CD4-positive, alpha-beta T cell (primary cell): ENCODE measurements at regions of chr1 and their contacts with region 1.

Region 1: GRCh38 chr1:157090196-157090647 is 9.4 kb downstream of the ETV3L start:
- DNase-seq: peak; percentile 78 to 92 (median 86)
- ATAC-seq: peak; percentile 83
- H3K4me3 ChIP-seq: no peak overlapping the region
- H3K4me3 Mint-ChIP-seq: no peak overlapping the region
- H3K27ac ChIP-seq: no peak overlapping the region
- H3K27ac Mint-ChIP-seq: no peak overlapping the region
- H3K4me1 ChIP-seq: peaks cover 7% of the 10 kb centered on the region
- H3K4me1 Mint-ChIP-seq: peaks cover 5% of the 10 kb centered on the region
- H3K27me3 ChIP-seq: peaks cover 0 to 2% of the 10 kb centered on the region in 2 experiments
- H3K27me3 Mint-ChIP-seq: peaks cover 6% of the 10 kb centered on the region
- CTCF ChIP-seq: peak; percentile 95

Region 2: DNA sequence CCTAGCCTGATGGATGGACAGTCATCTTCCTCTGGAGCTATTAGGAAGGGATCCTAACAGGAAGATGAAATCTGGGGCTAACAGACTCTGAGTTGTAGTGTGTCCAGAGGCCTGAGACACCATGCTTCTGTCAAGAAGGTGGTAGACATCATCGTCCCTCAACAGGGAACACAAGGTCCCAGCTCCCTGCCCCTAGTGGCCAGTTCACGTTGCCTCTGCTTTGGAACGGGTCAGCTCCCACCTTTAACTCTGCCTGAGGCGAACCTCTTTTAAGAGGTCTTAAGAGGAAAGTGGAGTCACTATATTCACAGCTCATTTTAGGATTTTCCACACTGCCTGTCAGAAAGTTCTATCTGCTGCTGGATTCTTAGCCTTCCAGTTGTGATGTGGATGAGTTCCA is 141.5 kb before region 1 on chr1:
- CTCF ChIA-PET with region 1: no interaction called
- POLR2A ChIA-PET with region 1: no interaction called
- intact Hi-C with region 1: no loop called
- DNase-seq: no peak
- ATAC-seq: no peak
- H3K4me3 ChIP-seq: no peak overlapping the region
- H3K4me3 Mint-ChIP-seq: no peak overlapping the region
- H3K27ac ChIP-seq: no peak overlapping the region
- H3K27ac Mint-ChIP-seq: no peak overlapping the region
- H3K4me1 ChIP-seq: no peaks in the 10 kb centered on the region
- H3K4me1 Mint-ChIP-seq: no peaks in the 10 kb centered on the region
- H3K27me3 ChIP-seq: no peaks in the 10 kb centered on the region
- H3K27me3 Mint-ChIP-seq: no peaks in the 10 kb centered on the region
- CTCF ChIP-seq: no peak

Region 3: DNA sequence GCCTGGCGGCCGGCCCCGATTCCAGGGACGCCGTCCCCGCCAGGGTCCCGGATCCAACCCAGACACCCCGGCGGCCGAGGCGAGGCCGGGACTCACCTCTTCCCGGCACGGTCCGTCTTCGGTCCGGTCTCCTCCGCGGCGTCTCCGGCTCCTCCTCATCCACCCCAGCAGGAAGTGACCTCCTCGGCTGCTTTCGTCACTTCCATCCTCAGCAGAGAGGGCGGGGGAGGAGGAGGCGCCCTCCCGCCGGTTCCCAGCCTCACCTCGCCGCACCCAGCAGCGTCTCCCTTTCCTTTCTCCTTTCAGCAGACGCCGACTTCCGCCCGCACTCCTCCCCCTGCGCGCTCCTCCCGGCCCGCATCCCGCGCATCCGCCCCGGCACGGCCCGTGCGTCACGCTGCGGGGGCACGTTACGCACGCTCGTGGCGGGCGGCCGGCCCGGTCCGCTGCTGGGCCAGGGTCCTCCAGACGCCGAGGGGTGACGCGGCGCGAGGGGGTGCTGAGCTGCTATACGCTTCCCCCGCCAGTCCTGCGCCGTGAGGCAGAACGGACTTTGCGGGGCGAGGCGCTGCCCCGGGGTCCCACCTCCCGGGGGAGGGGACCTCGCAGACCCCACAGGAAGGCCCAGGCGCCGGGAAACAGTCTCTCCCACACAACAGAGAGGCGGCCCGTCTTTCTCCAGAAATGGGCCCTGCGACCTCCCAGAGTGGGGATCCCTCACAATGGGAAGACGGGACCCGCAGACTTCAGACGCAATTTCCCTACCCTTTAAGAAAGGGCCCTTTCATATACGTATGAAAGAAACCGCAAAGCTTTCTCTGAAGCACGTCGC is 48.2 kb after region 1 on chr1 and contains the start of gene ETV3:
- CTCF ChIA-PET with region 1: interaction called, 27 read pairs
- POLR2A ChIA-PET with region 1: interaction called, 3 read pairs
- intact Hi-C with region 1: loop called in 1 of 2 experiments (anchors 5 kb)
- DNase-seq: peak; percentile 70 to 96 (median 81)
- ATAC-seq: peak; percentile 81
- H3K4me3 ChIP-seq: peak within 1 kb of the TSS; percentile 84
- H3K4me3 Mint-ChIP-seq: peak within 1 kb of the TSS; percentile 94
- H3K27ac ChIP-seq: peak within 1 kb of the TSS; percentile 90 to 98
- H3K27ac Mint-ChIP-seq: peak within 1 kb of the TSS; percentile 90
- H3K4me1 ChIP-seq: peaks cover 48% of the 10 kb centered on the region
- H3K4me1 Mint-ChIP-seq: peaks cover 60% of the 10 kb centered on the region
- H3K27me3 ChIP-seq: no peaks in the 10 kb centered on the region
- H3K27me3 Mint-ChIP-seq: no peaks in the 10 kb centered on the region
- CTCF ChIP-seq: no peak
- total RNA-seq, gene ETV3: 115 to 117 TPM

Region 4: DNA sequence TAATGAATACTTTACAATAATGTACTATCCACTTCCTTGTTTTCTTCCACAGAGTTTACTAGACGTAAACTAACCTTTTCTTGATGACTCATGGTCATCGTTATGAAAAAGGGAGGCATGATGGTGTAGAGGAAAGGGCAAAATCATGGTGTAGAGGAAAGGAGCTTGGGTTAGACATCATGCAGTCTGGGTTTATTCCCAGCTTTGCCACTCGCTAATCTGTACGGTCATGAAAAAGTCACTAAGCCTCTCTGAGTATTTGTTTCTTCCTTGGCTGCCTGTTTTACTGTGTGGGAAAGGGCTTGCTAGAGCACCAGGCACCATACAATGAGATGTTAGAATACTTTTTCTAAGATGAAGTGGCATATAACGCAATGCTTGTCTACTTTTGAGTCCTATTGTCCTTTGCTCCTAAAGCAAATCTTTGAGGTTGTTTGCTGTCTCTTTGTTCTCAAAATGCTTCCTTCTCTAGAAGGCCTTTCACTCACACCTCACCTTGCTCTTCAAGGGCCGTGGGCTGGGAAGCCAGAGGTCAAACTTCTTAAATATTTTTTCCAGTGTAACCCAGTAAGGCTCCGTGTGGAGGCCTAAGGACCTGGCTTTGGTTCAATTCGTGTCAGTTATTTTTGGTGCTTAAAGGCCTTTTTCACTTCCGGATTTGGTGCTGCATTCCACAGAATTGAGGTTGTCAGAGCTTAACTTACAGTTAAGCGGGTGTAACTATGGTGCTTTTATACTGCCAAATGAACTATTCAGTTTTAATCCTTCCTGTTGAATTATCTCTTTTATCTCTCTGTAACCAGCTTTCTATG is 57.9 kb after region 1 on chr1:
- CTCF ChIA-PET with region 1: interaction called, 241 read pairs
- POLR2A ChIA-PET with region 1: no interaction called
- intact Hi-C with region 1: no loop called
- DNase-seq: peak in 1 of 14 experiments; percentile 39
- ATAC-seq: no peak
- H3K4me3 ChIP-seq: no peak overlapping the region
- H3K4me3 Mint-ChIP-seq: no peak overlapping the region
- H3K27ac ChIP-seq: no peak overlapping the region
- H3K27ac Mint-ChIP-seq: no peak overlapping the region
- H3K4me1 ChIP-seq: peaks cover 5% of the 10 kb centered on the region
- H3K4me1 Mint-ChIP-seq: peaks cover 6% of the 10 kb centered on the region
- H3K27me3 ChIP-seq: no peaks in the 10 kb centered on the region
- H3K27me3 Mint-ChIP-seq: no peaks in the 10 kb centered on the region
- CTCF ChIP-seq: no peak